GM10248 (cell line): ENCODE measurements at regions of chr4 and their contacts with region 1.

Region 1: DNA sequence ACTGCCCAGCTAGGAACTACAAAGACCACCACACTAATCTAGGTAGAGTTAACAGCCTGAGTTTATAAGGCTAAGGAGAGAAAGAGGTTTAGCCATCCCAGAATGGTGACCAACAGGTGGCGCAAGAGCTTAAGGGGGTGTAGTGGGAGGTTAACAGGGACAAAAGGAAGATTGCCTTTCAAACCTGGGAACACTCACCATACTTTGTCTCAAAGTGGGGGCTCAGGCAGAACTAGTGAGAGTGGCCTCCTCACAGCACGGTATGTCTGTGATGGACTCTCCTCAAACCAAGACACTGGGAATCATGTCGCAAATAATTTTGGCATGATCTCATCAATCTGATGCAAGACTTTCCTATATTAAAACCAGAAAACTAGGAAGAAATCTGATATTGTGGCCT is 23.4 kb downstream of the CCNI start:
- DNase-seq: no peak
- CTCF ChIP-seq: peak; percentile 51

Region 2: DNA sequence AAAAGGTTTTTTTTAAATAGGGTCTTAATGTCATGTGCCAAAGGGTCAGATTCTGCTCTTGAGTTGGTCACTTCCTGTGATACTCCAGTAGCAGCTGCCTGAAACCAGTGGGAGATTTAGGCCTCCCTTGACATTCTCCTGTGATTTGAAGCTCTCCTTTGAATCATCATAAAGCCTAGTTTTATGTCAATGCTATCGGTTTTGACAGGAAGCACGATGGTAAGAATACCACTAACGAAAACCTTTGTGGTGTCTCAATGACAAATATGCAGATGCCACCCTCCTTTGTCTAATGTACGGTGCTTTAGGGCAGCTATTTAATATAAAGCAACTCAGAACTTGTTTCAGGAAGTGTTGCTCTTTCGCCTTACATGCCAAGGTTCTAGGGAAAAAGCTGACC is 20.8 kb before region 1 on chr4:
- CTCF ChIA-PET with region 1: interaction called, 25 read pairs
- POLR2A ChIA-PET with region 1: no interaction called
- DNase-seq: no peak
- CTCF ChIP-seq: no peak

Region 3: GRCh38 chr4:77037736-77038135 is 14.6 kb before region 1 on chr4:
- CTCF ChIA-PET with region 1: interaction called, 34 read pairs
- POLR2A ChIA-PET with region 1: no interaction called
- DNase-seq: no peak
- CTCF ChIP-seq: no peak

Region 4: GRCh38 chr4:77075869-77076799 is 23.8 kb after region 1 on chr4 and contains the start of gene CCNI:
- CTCF ChIA-PET with region 1: interaction called, 36 read pairs
- POLR2A ChIA-PET with region 1: no interaction called
- DNase-seq: peak; percentile 91
- CTCF ChIP-seq: no peak